A673 (cell line): ENCODE measurements at regions of chr17 and their contacts with region 1.

Region 1: DNA sequence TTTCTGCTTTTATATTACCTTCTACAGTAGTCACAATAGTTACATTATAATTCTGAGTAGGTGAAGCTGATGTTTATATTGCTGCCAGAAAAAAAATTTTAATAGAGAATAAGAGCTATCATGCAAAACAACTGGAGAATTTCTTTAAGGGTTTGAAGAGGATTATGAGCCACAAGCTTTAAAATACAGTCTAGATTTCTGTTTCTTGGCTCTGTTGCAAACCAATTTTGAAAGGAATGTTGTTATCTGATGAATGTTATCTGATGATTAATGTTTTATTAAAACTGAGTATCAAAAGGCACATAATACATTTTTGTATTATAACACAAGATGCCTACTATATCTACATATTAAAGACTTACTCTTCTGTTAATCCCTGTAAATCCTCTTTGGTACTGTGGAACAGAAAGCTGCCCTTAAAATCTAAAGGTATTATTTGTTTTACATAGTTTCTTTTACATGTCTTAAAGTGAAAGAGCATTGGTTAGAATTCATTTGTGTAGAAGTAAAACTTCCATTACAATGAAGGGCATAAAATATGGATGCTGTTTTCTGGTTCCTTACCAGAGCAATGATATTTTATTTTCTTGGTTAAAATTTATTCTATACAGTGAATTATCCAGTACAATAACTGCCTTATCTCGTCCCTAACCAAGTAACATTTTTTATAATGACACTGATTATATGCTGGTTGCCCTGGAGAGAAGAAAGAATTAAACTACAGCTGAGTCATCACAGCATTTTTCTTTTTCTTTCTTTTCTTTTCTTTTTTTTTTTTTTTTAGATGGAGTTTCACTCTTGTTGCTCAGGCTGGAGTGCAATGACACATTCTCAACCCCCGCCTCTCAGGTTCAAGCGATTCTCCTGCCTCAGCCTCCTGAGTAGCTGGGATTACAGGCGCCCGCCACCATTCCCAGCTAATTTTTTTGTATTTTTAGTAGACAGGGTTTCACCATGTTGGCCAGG is 205.7 kb downstream of the TANC2 start:
- DNase-seq: peak; percentile 12
- H3K4me3 ChIP-seq: no peak overlapping the region
- H3K27ac ChIP-seq: no peak overlapping the region
- H3K4me1 ChIP-seq: peaks cover 4% of the 10 kb centered on the region
- H3K27me3 ChIP-seq: no peaks in the 10 kb centered on the region
- CTCF ChIP-seq: no peak

Region 2: DNA sequence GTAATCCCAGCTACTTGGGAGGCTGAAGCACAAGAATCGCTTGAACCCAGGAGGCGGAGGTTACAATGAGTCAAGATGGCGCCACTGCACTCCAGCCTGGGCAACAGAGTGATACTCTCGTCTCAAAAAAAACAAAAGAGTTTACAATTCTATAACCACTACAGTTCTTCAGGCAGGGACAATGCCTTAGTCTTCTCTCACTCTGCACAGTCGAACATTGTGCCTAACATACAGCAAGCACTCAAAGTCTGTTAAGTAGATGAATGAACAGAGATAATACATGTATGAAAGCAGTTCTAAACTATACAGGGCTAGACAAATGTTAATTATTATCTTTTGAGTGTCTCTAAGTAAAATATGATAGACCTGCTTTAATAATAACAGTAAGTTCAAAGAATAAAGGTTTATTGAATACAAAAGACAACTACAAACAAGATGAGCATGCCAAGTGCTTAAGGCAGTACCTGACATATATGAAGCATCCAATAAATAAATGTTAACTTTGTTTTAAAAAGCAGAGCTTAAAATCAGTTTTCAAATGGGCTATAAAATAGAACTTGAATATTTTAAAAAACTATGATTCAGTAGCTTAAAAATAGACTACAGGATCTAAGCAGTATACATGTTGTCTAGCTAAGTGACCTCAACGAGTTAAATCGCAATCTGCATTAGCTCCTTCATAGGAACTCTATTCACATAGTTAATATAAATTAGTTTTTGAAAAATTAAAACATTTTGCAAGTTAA is 1263.2 kb before region 1 on chr17:
- CTCF ChIA-PET with region 1: no interaction called
- POLR2A ChIA-PET with region 1: interaction called, 10 read pairs
- intact Hi-C with region 1: no loop called
- DNase-seq: no peak
- H3K4me3 ChIP-seq: no peak overlapping the region
- H3K27ac ChIP-seq: no peak overlapping the region
- H3K4me1 ChIP-seq: no peaks in the 10 kb centered on the region
- H3K27me3 ChIP-seq: no peaks in the 10 kb centered on the region
- CTCF ChIP-seq: no peak